CD4-positive, alpha-beta memory T cell (primary cell): ENCODE measurements at regions of chr17 and their contacts with region 1.

Region 1: GRCh38 chr17:38351412-38352222 is at the start of gene SOCS7:
- DNase-seq: peak; percentile 88 to 92 (median 89)
- H3K4me3 ChIP-seq: peak within 1 kb of the TSS; percentile 20 to 79
- H3K4me3 Mint-ChIP-seq: peak within 1 kb of the TSS; percentile 95 to 99 (median 98)
- H3K27ac ChIP-seq: peak within 1 kb of the TSS; percentile 62
- H3K27ac Mint-ChIP-seq: peak within 1 kb of the TSS; percentile 87 to 99 (median 97)
- H3K4me1 ChIP-seq: peaks cover 34% of the 10 kb centered on the region
- H3K4me1 Mint-ChIP-seq: peaks cover 33 to 62% (median 43%) of the 10 kb centered on the region in 4 donors
- H3K27me3 ChIP-seq: no peaks in the 10 kb centered on the region
- H3K27me3 Mint-ChIP-seq: peaks cover 0 to 2% of the 10 kb centered on the region in 2 donors
- total RNA-seq, gene SOCS7: 23.1 to 24.7 TPM

Region 2: GRCh38 chr17:38322091-38322779 is 29.4 kb before region 1 on chr17:
- CTCF ChIA-PET with region 1: interaction called, 13 read pairs
- POLR2A ChIA-PET with region 1: no interaction called
- intact Hi-C with region 1: no loop called
- DNase-seq: peak; percentile 50 to 71 (median 58)
- H3K4me3 ChIP-seq: no peak overlapping the region
- H3K4me3 Mint-ChIP-seq: no peak overlapping the region
- H3K27ac ChIP-seq: no peak overlapping the region
- H3K27ac Mint-ChIP-seq: no peak overlapping the region
- H3K4me1 ChIP-seq: no peaks in the 10 kb centered on the region
- H3K4me1 Mint-ChIP-seq: peaks cover 0 to 8% (median under 1%) of the 10 kb centered on the region in 4 donors
- H3K27me3 ChIP-seq: no peaks in the 10 kb centered on the region
- H3K27me3 Mint-ChIP-seq: no peaks in the 10 kb centered on the region

Region 3: GRCh38 chr17:38379438-38379837 is 27.8 kb after region 1 on chr17:
- CTCF ChIA-PET with region 1: interaction called, 11 read pairs
- POLR2A ChIA-PET with region 1: interaction called, 3 read pairs
- intact Hi-C with region 1: no loop called
- DNase-seq: no peak
- H3K4me3 ChIP-seq: no peak overlapping the region
- H3K4me3 Mint-ChIP-seq: no peak overlapping the region
- H3K27ac ChIP-seq: no peak overlapping the region
- H3K27ac Mint-ChIP-seq: peak overlapping the region in 1 of 7 donors; percentile 65
- H3K4me1 ChIP-seq: no peaks in the 10 kb centered on the region
- H3K4me1 Mint-ChIP-seq: no peaks in the 10 kb centered on the region
- H3K27me3 ChIP-seq: no peaks in the 10 kb centered on the region
- H3K27me3 Mint-ChIP-seq: no peaks in the 10 kb centered on the region

Region 4: GRCh38 chr17:38403491-38403890 is 51.9 kb after region 1 on chr17:
- CTCF ChIA-PET with region 1: interaction called, 12 read pairs
- POLR2A ChIA-PET with region 1: no interaction called
- intact Hi-C with region 1: no loop called
- DNase-seq: no peak
- H3K4me3 ChIP-seq: no peak overlapping the region
- H3K4me3 Mint-ChIP-seq: no peak overlapping the region
- H3K27ac ChIP-seq: no peak overlapping the region
- H3K27ac Mint-ChIP-seq: no peak overlapping the region
- H3K4me1 ChIP-seq: no peaks in the 10 kb centered on the region
- H3K4me1 Mint-ChIP-seq: peaks cover 0 to 2% (median 0%) of the 10 kb centered on the region in 4 donors
- H3K27me3 ChIP-seq: no peaks in the 10 kb centered on the region
- H3K27me3 Mint-ChIP-seq: no peaks in the 10 kb centered on the region

Region 5: GRCh38 chr17:38415250-38416194 is 63.9 kb after region 1 on chr17:
- CTCF ChIA-PET with region 1: interaction called, 192 read pairs
- POLR2A ChIA-PET with region 1: interaction called, 17 read pairs
- intact Hi-C with region 1: no loop called
- DNase-seq: no peak
- H3K4me3 ChIP-seq: no peak overlapping the region
- H3K4me3 Mint-ChIP-seq: no peak overlapping the region
- H3K27ac ChIP-seq: no peak overlapping the region
- H3K27ac Mint-ChIP-seq: no peak overlapping the region
- H3K4me1 ChIP-seq: peaks cover 9% of the 10 kb centered on the region
- H3K4me1 Mint-ChIP-seq: peaks cover 2 to 12% (median 3%) of the 10 kb centered on the region in 4 donors
- H3K27me3 ChIP-seq: peaks cover 12% of the 10 kb centered on the region
- H3K27me3 Mint-ChIP-seq: peaks cover 25 to 31% of the 10 kb centered on the region in 2 donors

Region 6: DNA sequence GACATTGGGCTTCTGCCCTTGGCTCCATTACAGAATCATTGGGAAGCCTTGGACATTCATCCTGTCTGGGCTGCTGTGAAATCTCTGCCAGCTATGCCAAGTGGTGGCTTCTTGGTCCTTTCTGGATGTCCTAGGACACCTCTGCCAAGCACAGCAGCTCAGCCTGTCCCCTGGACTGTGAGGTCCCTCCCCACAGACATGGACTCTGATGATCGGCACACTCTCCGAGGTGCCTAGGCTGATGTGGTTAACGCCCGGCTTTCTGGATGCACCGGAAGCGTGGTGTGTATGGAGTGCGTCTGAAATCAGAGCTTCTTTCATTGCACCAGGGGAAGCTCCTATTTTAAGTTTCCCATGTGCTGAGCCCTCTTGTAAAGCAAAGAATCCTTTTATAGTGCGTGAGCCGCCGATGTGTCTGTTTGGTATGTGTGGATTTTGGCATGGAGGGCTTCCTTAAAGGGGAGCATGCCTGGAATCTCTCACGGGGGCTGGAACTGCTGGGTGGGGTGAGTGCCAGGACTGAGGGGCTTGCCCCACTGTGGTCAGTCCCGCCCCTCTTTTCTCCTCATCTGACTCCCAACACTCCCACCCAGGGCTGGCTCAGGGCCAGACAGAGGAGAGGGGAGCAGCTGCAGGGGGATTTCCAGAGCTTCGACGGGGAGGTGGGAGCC is 69.7 kb after region 1 on chr17:
- CTCF ChIA-PET with region 1: interaction called, 26 read pairs
- POLR2A ChIA-PET with region 1: no interaction called
- intact Hi-C with region 1: no loop called
- DNase-seq: no peak
- H3K4me3 ChIP-seq: no peak overlapping the region
- H3K4me3 Mint-ChIP-seq: no peak overlapping the region
- H3K27ac ChIP-seq: no peak overlapping the region
- H3K27ac Mint-ChIP-seq: no peak overlapping the region
- H3K4me1 ChIP-seq: peaks cover 4% of the 10 kb centered on the region
- H3K4me1 Mint-ChIP-seq: peaks cover 2 to 12% (median 6%) of the 10 kb centered on the region in 4 donors
- H3K27me3 ChIP-seq: peaks cover 22% of the 10 kb centered on the region
- H3K27me3 Mint-ChIP-seq: peaks cover 42 to 58% of the 10 kb centered on the region in 2 donors

Region 7: DNA sequence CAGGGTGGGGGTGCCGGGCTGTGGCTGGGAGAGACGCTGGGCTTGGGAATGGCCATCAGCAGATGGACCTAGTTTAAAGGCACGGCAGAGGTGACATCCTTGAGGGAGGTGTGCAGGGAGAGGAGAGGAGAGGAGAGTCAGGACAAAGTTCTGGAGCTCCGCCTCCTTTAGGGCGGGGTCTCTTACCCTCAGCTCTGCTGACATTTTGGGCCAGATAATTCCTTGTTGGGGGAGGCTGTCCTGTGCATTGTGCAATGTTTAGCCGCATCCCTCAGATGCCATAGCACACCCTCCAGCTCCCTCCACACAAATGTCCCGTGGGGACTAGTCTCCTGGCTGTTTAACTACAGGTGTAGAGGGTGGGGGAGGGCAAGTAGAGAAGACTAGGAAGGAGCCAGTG is 124.9 kb after region 1 on chr17:
- CTCF ChIA-PET with region 1: no interaction called
- POLR2A ChIA-PET with region 1: no interaction called
- intact Hi-C with region 1: no loop called
- DNase-seq: no peak
- H3K4me3 ChIP-seq: no peak overlapping the region
- H3K4me3 Mint-ChIP-seq: no peak overlapping the region
- H3K27ac ChIP-seq: no peak overlapping the region
- H3K27ac Mint-ChIP-seq: peak overlapping the region in 1 of 7 donors; percentile 7
- H3K4me1 ChIP-seq: no peaks in the 10 kb centered on the region
- H3K4me1 Mint-ChIP-seq: no peaks in the 10 kb centered on the region
- H3K27me3 ChIP-seq: no peaks in the 10 kb centered on the region
- H3K27me3 Mint-ChIP-seq: peaks cover 0 to 2% of the 10 kb centered on the region in 2 donors